ENCODE measurements at regions of chrX and their contacts with region 1.

Region 1: DNA sequence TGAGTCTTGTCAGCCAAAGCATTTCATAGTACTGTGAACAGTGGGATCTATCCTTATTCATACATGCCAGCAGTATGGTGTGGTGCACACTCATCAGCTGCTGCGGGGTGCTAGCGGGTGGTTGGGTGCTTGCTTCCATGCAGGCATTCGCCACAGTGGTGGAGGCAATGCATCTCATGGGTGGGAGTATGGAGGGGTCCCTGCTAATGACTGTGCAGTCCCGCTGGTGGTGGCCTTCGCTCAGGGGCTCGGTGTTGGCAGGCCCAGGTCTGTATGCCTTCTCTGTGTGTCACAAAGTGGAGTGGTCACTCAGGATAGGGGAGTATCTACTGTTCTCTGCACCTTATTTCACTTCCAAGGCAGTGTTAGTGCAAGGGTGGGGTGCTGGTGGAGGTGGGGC is 122.6 kb downstream of the POU3F4 start:
- DNase-seq: no peak
- H3K4me3 Mint-ChIP-seq: no peak overlapping the region
- H3K27ac Mint-ChIP-seq: no peak overlapping the region
- H3K4me1 Mint-ChIP-seq: peaks cover 6% of the 10 kb centered on the region
- H3K27me3 Mint-ChIP-seq: no peaks in the 10 kb centered on the region
- CTCF ChIP-seq: no peak

Region 2: GRCh38 chrX:82218361-82218760 is 1412.3 kb before region 1 on chrX:
- CTCF ChIA-PET with region 1: interaction called, 18 read pairs
- POLR2A ChIA-PET with region 1: no interaction called
- intact Hi-C with region 1: loop called (anchors 1 kb)
- DNase-seq: peak; percentile 61
- H3K4me3 Mint-ChIP-seq: no peak overlapping the region
- H3K27ac Mint-ChIP-seq: no peak overlapping the region
- H3K4me1 Mint-ChIP-seq: peaks cover 11% of the 10 kb centered on the region
- H3K27me3 Mint-ChIP-seq: peaks cover 18% of the 10 kb centered on the region
- CTCF ChIP-seq: peak; percentile 60

Region 3: GRCh38 chrX:82648052-82648451 is 982.6 kb before region 1 on chrX:
- CTCF ChIA-PET with region 1: no interaction called
- POLR2A ChIA-PET with region 1: no interaction called
- intact Hi-C with region 1: loop called (anchors 5 kb)
- DNase-seq: peak; percentile 27
- H3K4me3 Mint-ChIP-seq: no peak overlapping the region
- H3K27ac Mint-ChIP-seq: no peak overlapping the region
- H3K4me1 Mint-ChIP-seq: no peaks in the 10 kb centered on the region
- H3K27me3 Mint-ChIP-seq: no peaks in the 10 kb centered on the region
- CTCF ChIP-seq: no peak

Region 4: GRCh38 chrX:83469551-83469950 is 161.1 kb before region 1 on chrX:
- CTCF ChIA-PET with region 1: interaction called, 40 read pairs
- POLR2A ChIA-PET with region 1: no interaction called
- intact Hi-C with region 1: loop called (anchors 1 kb)
- DNase-seq: peak; percentile 59
- H3K4me3 Mint-ChIP-seq: no peak overlapping the region
- H3K27ac Mint-ChIP-seq: no peak overlapping the region
- H3K4me1 Mint-ChIP-seq: peaks cover 5% of the 10 kb centered on the region
- H3K27me3 Mint-ChIP-seq: no peaks in the 10 kb centered on the region
- CTCF ChIP-seq: peak; percentile 51

Region 5: GRCh38 chrX:83759872-83760271 is 129.2 kb after region 1 on chrX:
- CTCF ChIA-PET with region 1: interaction called, 3 read pairs
- POLR2A ChIA-PET with region 1: no interaction called
- intact Hi-C with region 1: loop called (anchors 5 kb)
- DNase-seq: peak; percentile 76
- H3K4me3 Mint-ChIP-seq: no peak overlapping the region
- H3K27ac Mint-ChIP-seq: no peak overlapping the region
- H3K4me1 Mint-ChIP-seq: peaks cover 12% of the 10 kb centered on the region
- H3K27me3 Mint-ChIP-seq: no peaks in the 10 kb centered on the region
- CTCF ChIP-seq: peak; percentile 74

Region 6: DNA sequence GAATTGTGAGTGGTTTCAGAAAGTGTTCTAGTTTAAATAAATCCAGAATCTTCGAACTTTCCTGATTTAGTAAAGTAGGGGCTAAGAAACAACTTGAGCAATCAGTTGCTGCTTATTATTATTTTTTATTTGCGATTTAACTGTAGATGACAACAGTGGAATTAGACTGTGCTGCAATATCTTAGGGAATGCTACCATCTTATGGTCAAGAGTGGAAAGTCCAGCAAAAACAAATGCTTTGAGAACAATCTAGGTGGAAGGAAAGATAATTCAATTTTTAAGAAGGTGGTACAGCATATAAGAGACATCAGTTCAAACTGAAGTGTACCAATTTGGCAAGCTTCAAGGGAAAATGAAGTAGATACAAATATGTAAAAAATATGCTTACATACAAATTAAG is 303.6 kb after region 1 on chrX:
- CTCF ChIA-PET with region 1: no interaction called
- POLR2A ChIA-PET with region 1: no interaction called
- intact Hi-C with region 1: no loop called
- DNase-seq: peak; percentile 15
- H3K4me3 Mint-ChIP-seq: no peak overlapping the region
- H3K27ac Mint-ChIP-seq: no peak overlapping the region
- H3K4me1 Mint-ChIP-seq: peaks cover 7% of the 10 kb centered on the region
- H3K27me3 Mint-ChIP-seq: no peaks in the 10 kb centered on the region
- CTCF ChIP-seq: peak; percentile 32